Pancreas (tissue), 10 donors: ENCODE measurements at regions of chr2 and their contacts with region 1.

Region 1: DNA sequence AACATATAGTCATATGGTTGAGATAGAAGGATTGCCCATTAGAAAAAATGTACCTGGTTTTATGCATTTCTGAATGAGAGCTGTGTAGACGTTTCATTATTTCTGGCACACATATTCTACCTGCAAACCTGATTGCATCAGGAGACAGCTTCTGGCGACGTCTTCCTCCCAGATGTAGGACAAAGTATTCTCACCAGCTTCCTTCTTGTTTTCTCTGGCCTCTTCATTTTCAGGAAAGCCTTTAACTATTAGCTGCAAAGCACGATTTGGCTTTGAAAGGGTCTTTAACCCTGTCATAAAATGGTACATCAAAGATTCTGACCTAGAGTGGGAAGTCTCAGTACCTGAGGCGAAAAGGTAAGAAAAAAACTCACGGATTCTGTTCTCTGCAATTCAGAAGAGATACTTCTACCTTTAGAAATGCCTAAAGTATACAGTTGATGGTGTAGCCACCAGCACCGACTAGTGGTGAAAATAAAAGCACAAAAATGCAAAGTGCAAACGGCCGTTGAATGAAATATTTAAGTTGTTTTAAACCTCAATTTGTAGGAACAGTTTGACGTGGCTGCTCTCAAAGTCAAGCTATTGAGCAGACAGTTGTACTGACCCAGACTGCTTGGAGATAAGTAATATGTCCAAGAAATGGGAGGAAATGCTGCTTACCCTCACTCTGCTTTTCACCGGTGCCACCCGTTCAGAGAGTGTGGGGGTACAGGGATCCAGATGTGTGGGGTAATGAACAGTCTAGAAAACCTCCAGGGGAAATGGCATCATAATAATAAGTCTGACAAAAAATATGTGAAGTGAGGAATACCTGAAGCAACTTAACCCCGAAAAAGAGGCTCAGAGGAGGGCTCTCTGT is 20.2 kb downstream of the IL18RAP start:
- DNase-seq: peak in 1 of 6 donors; percentile 15
- ATAC-seq: peak in 3 of 4 donors; percentile 65 to 74 (median 69)
- H3K4me3 ChIP-seq: no peak overlapping the region
- H3K27ac ChIP-seq: no peak overlapping the region
- H3K4me1 ChIP-seq: no peaks in the 10 kb centered on the region
- H3K27me3 ChIP-seq: no peaks in the 10 kb centered on the region
- CTCF ChIP-seq: peak; percentile 26 to 49 (median 45)

Region 2: GRCh38 chr2:102041351-102041750 is 401.8 kb before region 1 on chr2:
- intact Hi-C with region 1: no loop called
- DNase-seq: peak in 1 of 6 donors; percentile 50
- ATAC-seq: peak in 3 of 4 donors; percentile 57 to 83 (median 76)
- H3K4me3 ChIP-seq: no peak overlapping the region
- H3K27ac ChIP-seq: no peak overlapping the region
- H3K4me1 ChIP-seq: no peaks in the 10 kb centered on the region
- H3K27me3 ChIP-seq: no peaks in the 10 kb centered on the region
- CTCF ChIP-seq: no peak

Region 3: DNA sequence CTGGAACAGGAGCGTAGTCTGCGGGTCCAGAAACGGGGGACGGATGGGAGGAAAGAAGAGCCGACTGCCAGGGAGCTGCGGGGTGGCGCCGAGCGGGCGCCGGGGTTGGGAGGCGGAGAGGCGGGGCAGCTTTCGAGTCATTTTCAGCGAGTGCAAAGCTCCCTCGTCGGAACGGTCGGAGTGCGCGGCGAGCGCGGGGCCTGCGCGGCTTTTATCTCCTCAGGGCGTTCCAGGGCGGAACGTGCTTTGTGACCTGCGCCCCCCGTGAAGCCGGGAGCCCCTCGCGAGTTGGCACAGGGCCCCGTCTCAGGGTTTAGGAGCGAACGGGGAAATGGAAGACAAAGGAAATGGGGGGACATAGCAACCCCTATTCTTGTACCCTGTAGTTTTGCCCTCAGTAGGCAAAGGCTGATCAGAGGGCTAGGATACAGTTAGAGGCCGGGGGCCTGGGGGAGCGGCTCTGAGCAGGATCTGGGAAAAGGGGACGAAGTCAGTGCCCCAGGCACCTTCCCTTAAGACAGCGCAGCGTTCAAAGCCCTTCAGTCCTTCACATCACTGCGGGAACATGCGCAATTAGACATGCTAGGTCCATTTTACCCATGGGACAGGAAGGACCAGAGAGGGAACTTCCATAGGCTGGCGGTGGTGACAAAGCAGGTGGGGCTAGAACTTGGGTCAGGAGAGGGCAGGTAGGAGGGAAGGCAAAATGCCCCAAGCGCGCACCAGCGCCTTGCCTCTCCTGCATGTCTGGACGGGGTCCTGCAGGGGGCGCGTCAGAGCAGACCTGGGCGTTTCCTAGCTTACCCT is 192.0 kb before region 1 on chr2:
- intact Hi-C with region 1: loop called in 1 of 3 experiments (anchors 5 kb)
- DNase-seq: peak in 5 of 6 donors; percentile 46 to 80 (median 53)
- ATAC-seq: peak; percentile 84 to 95 (median 89)
- H3K4me3 ChIP-seq: peak overlapping the region in 2 of 4 donors; percentile 27 to 38
- H3K27ac ChIP-seq: no peak overlapping the region
- H3K4me1 ChIP-seq: peaks cover 0 to 2% (median 0%) of the 10 kb centered on the region in 3 donors
- H3K27me3 ChIP-seq: peaks cover 0 to 4% (median 0%) of the 10 kb centered on the region in 4 donors
- CTCF ChIP-seq: peak; percentile 33 to 52 (median 46)

Region 4: GRCh38 chr2:102366406-102367112 is 76.6 kb before region 1 on chr2:
- intact Hi-C with region 1: no loop called
- DNase-seq: no peak
- ATAC-seq: no peak
- H3K4me3 ChIP-seq: no peak overlapping the region
- H3K27ac ChIP-seq: no peak overlapping the region
- H3K4me1 ChIP-seq: no peaks in the 10 kb centered on the region
- H3K27me3 ChIP-seq: no peaks in the 10 kb centered on the region
- CTCF ChIP-seq: no peak

Region 5: DNA sequence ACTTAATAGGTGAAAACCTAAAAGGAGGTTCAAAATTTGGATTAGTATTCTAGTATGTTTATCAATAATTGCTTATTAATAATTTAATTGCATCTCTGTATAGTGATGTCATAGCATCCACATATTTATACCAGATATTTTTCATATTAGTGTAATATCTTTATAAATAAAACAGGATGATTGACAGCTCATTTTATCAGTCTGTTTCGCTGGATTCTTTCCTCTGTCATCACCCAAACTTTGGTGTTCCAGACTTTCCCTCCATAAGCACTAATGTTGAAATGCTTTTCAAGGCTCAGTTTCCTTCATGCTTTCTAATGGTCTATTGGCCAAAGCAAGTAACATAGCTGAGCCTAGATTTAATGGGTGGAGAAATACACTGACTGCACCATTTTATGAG is 667.0 kb after region 1 on chr2:
- intact Hi-C with region 1: no loop called
- DNase-seq: no peak
- ATAC-seq: no peak
- H3K4me3 ChIP-seq: no peak overlapping the region
- H3K27ac ChIP-seq: no peak overlapping the region
- H3K4me1 ChIP-seq: no peaks in the 10 kb centered on the region
- H3K27me3 ChIP-seq: no peaks in the 10 kb centered on the region
- CTCF ChIP-seq: no peak